Sciatic nerve (tissue), 2 donors: ENCODE measurements at regions of chr5 and their contacts with region 1.

Region 1: DNA sequence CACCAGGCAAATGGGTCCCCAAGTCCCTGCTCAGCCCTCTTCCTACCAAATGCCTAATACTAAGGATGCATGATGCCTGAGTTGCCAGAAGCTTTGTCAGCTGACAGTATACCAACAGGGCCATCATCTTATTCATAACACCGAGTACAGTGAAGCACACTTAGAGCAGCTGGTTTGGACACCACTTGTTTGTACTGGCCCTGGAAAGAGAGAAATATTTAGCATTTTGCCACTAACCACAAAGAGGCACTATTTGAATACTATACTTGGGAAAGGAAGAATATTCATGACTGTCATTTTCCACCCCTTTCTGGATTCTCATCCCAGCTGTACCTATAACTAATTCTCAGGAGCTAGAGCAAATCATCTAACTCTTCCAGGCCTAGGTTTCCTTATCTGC is 364.4 kb upstream of the KIF2A start:
- DNase-seq: no peak
- ATAC-seq: peak; percentile 30

Region 2: DNA sequence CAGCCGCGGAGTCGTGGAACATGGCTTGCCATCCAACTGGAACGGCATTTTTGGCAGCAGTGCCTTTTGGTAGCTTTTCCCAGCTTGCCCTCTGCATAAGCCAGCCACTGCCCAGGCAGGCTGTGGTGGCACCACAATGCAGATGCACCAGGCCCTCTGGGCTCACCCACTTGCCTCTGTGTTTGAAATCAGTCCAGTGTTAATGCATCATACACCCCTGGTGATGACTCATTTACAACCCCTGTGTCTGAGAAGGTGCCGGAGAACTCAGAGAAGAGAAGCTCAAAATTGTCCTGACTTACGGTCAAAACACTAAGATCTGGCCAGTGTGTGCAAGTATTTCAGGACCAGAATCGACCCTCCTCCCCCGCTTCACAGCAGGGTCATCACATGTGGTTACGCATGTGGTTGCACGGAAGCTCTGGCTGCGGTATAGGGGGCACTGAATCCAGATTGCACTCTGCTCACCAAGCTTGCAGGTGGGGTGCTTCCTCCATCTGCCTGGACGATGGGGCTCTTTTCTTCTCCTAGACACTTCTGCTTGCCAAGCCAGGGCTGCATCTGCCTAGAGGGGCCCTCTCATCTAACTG is 712.9 kb before region 1 on chr5:
- intact Hi-C with region 1: no loop called
- DNase-seq: no peak
- ATAC-seq: no peak

Region 3: DNA sequence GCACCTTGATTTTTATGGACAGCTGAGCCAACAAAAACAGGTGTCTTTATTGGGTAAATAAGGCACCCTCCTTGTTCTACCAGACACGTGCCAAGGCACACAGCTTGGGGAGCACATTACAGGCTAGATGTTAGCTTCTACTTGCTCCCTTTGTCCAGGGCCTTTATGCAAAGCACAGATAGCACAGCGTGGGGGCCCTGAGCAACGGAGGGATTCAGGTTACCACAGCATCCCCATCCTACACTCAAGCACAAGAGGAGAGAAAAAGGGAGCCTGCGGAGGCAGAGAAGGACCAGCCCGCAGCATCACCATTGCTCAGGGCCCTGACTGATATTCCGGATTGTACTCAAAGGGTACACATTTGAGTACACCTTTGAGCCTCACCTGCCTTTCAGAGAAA is 182.6 kb after region 1 on chr5:
- intact Hi-C with region 1: loop called (anchors 10 kb)
- DNase-seq: no peak
- ATAC-seq: no peak

Region 4: GRCh38 chr5:62395210-62395950 is 453.7 kb after region 1 on chr5:
- intact Hi-C with region 1: loop called (anchors 5 kb)
- DNase-seq: no peak
- ATAC-seq: no peak